ENCODE measurements at regions of chr7 and their contacts with region 1.

Region 1: GRCh38 chr7:156612930-156613329 is 27.6 kb upstream of the RNF32 start:
- DNase-seq: peak; percentile 87
- ATAC-seq: peak; percentile 99
- H3K4me3 Mint-ChIP-seq: no peak overlapping the region
- H3K27ac Mint-ChIP-seq: no peak overlapping the region
- H3K4me1 Mint-ChIP-seq: peaks cover 25% of the 10 kb centered on the region
- H3K27me3 Mint-ChIP-seq: peaks cover 47% of the 10 kb centered on the region

Region 2: GRCh38 chr7:156640257-156640948 is 27.5 kb after region 1 on chr7 and contains the start of gene RNF32:
- CTCF ChIA-PET with region 1: interaction called, 3 read pairs
- POLR2A ChIA-PET with region 1: no interaction called
- intact Hi-C with region 1: loop called in 1 of 2 experiments (anchors 1 kb)
- DNase-seq: peak; percentile 100
- ATAC-seq: peak; percentile 90
- H3K4me3 Mint-ChIP-seq: peak within 1 kb of the TSS; percentile 76
- H3K27ac Mint-ChIP-seq: peak within 1 kb of the TSS; percentile 87
- H3K4me1 Mint-ChIP-seq: peaks cover 15% of the 10 kb centered on the region
- H3K27me3 Mint-ChIP-seq: peaks cover 29% of the 10 kb centered on the region
- total RNA-seq, gene RNF32: 0.71 to 0.90 TPM

Measured in activated CD4-positive, alpha-beta T cell treated with anti-CD3 and anti-CD28 coated beads for 36 hours (primary cell).